Gastrocnemius medialis (tissue), 4 donors: ENCODE measurements at regions of chr3 and their contacts with region 1.

Region 1: GRCh38 chr3:132879636-132880035 is 157.4 kb upstream of the NPHP3 start:
- DNase-seq: no peak
- ATAC-seq: no peak
- H3K4me3 ChIP-seq: no peak overlapping the region
- H3K27ac ChIP-seq: no peak overlapping the region
- H3K4me1 ChIP-seq: no peaks in the 10 kb centered on the region
- H3K27me3 ChIP-seq: no peaks in the 10 kb centered on the region
- CTCF ChIP-seq: no peak
- POLR2A ChIP-seq: no peak

Region 2: DNA sequence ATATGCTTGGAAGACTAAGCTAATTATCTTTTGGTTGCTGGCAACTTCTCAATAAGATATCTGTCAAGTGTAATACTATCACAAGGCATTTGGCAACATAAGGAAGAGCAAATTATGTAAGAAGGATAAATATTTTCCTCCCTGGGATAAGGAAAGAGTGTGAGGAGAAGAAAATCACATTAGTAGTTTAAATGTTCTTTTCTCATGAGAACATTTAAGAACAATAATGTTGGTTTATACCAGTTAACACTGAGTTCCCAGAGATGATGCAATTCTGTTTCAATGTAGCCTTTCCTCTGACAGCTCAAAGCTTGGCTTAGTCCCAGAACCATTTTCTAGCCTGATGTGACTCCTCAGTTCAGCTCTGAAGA is 91.3 kb before region 1 on chr3:
- in situ Hi-C with region 1: loop called in 1 of 4 experiments (anchors 25 kb)
- intact Hi-C with region 1: no loop called
- DNase-seq: peak in 1 of 2 donors; percentile 26
- ATAC-seq: peak; percentile 73 to 74
- H3K4me3 ChIP-seq: no peak overlapping the region
- H3K27ac ChIP-seq: peak overlapping the region; percentile 14 to 49 (median 30)
- H3K4me1 ChIP-seq: peaks cover 25 to 34% of the 10 kb centered on the region in 2 donors
- H3K27me3 ChIP-seq: no peaks in the 10 kb centered on the region
- CTCF ChIP-seq: no peak
- POLR2A ChIP-seq: no peak